ENCODE measurements at regions of chr12 and their contacts with region 1.

Region 1: GRCh38 chr12:110015132-110015531 is 15.9 kb downstream of the ANKRD13A start:
- DNase-seq: no peak
- H3K4me3 Mint-ChIP-seq: no peak overlapping the region
- H3K27ac Mint-ChIP-seq: peak overlapping the region; percentile 20
- H3K4me1 Mint-ChIP-seq: peaks cover 42% of the 10 kb centered on the region
- H3K27me3 Mint-ChIP-seq: no peaks in the 10 kb centered on the region

Region 2: GRCh38 chr12:109934026-109934425 is 81.1 kb before region 1 on chr12:
- CTCF ChIA-PET with region 1: no interaction called
- intact Hi-C with region 1: loop called (anchors 1 kb)
- DNase-seq: peak; percentile 68
- H3K4me3 Mint-ChIP-seq: no peak overlapping the region
- H3K27ac Mint-ChIP-seq: peak overlapping the region; percentile 5
- H3K4me1 Mint-ChIP-seq: no peaks in the 10 kb centered on the region
- H3K27me3 Mint-ChIP-seq: no peaks in the 10 kb centered on the region